PC-9 (cell line): ENCODE measurements at regions of chr22 and their contacts with region 1.

Region 1: DNA sequence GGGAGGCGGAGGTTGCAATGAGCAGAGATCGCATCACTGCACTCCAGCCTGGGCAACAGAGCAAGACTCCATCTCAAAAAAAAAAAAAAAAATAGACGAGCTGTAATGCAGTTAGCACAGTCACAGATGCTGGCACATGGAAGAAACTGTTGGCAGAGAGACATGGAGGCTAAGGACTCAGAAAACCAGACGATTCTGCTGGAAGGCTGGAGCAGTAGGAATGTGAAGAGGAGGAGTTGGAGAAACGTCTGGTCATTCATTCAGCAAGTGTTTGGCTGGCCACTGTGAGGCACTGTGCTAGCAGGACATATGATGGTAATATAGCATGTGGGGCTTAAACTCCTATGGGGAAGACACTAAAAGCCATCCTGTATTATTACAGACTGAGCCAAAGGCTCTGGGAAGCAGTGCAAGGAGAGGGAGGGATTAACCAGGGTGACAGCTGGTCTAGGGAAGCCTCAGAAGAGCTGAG is 5.0 kb downstream of the UQCR10 start:
- DNase-seq: peak in 1 of 2 experiments; percentile 45
- H3K4me3 ChIP-seq: no peak overlapping the region
- H3K27ac ChIP-seq: peak overlapping the region; percentile 75
- H3K4me1 ChIP-seq: peaks cover 52% of the 10 kb centered on the region
- H3K27me3 ChIP-seq: no peaks in the 10 kb centered on the region
- CTCF ChIP-seq: peak; percentile 47

Region 2: DNA sequence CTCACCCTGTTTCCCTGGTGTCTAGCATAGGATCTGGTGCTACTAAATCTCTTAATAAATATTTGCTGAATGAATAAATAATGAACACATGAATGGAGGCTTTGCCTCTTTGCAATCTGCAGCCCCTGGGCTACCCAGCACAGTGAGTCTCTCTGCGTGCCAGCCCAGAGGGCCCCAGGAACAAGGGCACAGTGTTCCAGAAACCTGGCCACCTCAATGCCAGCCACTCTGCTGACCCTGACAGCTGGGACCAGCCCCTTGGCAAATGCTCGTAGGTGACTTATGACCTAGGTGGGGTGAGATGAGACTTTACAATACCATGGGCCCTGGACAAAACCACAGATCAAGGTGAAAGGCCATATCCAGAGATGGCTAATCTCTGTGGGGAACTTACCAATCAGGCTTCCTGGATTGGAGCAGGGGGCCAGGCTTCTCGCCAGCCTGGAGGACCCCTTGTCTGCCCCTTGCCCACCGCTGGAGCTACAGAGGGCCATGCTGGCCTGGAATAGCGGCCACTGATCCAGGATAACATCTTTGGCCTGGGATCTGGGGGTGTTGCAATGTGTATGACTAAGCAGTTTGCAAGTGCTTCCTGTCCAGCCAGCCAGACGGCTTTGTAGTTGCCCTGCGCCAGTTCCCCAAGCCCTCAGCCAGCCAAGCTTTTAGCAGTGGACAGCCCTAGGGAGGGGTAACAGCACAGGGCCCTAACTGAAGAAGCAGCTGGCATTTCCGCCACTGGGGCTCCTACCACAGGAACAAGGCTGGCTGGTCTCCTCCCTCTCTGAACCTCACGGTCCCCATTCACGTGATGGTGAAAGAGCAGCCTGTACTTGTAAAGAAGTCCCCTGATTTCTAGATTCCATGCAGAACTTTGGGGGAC is 26.8 kb after region 1 on chr22:
- CTCF ChIA-PET with region 1: no interaction called
- POLR2A ChIA-PET with region 1: interaction called, 10 read pairs
- intact Hi-C with region 1: loop called (anchors 2 kb)
- DNase-seq: peak; percentile 90 to 98
- H3K4me3 ChIP-seq: peak overlapping the region; percentile 44; the same call in 1 of the 2 replicates
- H3K27ac ChIP-seq: peak overlapping the region; percentile 93
- H3K4me1 ChIP-seq: peaks cover 76% of the 10 kb centered on the region
- H3K27me3 ChIP-seq: no peaks in the 10 kb centered on the region
- CTCF ChIP-seq: no peak

Region 3: GRCh38 chr22:29848111-29848510 is 75.9 kb after region 1 on chr22:
- CTCF ChIA-PET with region 1: interaction called, 17 read pairs
- POLR2A ChIA-PET with region 1: no interaction called
- intact Hi-C with region 1: no loop called
- DNase-seq: no peak
- H3K4me3 ChIP-seq: no peak overlapping the region
- H3K27ac ChIP-seq: no peak overlapping the region
- H3K4me1 ChIP-seq: peaks cover 8% of the 10 kb centered on the region
- H3K27me3 ChIP-seq: no peaks in the 10 kb centered on the region
- CTCF ChIP-seq: no peak

Region 4: DNA sequence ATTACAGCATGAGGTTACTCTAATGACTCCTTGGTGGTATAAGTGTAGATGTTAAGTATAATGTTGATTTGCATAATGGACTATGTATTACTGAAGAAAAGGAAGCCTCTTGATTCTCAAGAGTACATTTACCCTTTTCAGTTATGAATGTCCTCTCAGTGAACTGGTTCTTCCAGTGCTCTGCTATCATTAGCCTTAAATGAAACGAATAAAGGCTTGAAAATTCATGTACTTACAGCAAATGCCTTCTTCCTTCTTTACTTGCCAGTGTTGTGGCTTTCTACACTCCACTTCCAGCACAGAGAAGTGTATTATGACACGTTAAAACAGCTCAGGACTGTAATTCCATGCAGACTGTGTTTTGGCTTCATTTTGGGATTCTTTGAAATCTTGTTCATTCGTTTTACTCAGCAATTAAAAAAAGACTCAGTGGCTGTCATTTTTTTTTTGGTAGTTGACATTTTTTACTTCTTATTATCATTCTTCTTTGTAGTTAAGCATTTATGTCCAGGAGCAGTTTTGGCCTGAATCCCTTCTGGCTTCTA is 207.6 kb after region 1 on chr22:
- CTCF ChIA-PET with region 1: no interaction called
- POLR2A ChIA-PET with region 1: interaction called, 21 read pairs
- intact Hi-C with region 1: no loop called
- DNase-seq: no peak
- H3K4me3 ChIP-seq: no peak overlapping the region
- H3K27ac ChIP-seq: peak overlapping the region; percentile 24
- H3K4me1 ChIP-seq: peaks cover 27% of the 10 kb centered on the region
- H3K27me3 ChIP-seq: no peaks in the 10 kb centered on the region
- CTCF ChIP-seq: no peak

Region 5: GRCh38 chr22:30318799-30319419 is 546.7 kb after region 1 on chr22:
- CTCF ChIA-PET with region 1: no interaction called
- POLR2A ChIA-PET with region 1: interaction called, 16 read pairs
- intact Hi-C with region 1: no loop called
- DNase-seq: no peak
- H3K4me3 ChIP-seq: no peak overlapping the region
- H3K27ac ChIP-seq: no peak overlapping the region
- H3K4me1 ChIP-seq: peaks cover 18% of the 10 kb centered on the region
- H3K27me3 ChIP-seq: no peaks in the 10 kb centered on the region
- CTCF ChIP-seq: no peak